Mammary epithelial cell (primary cell): ENCODE measurements at regions of chr4 and their contacts with region 1.

Region 1: DNA sequence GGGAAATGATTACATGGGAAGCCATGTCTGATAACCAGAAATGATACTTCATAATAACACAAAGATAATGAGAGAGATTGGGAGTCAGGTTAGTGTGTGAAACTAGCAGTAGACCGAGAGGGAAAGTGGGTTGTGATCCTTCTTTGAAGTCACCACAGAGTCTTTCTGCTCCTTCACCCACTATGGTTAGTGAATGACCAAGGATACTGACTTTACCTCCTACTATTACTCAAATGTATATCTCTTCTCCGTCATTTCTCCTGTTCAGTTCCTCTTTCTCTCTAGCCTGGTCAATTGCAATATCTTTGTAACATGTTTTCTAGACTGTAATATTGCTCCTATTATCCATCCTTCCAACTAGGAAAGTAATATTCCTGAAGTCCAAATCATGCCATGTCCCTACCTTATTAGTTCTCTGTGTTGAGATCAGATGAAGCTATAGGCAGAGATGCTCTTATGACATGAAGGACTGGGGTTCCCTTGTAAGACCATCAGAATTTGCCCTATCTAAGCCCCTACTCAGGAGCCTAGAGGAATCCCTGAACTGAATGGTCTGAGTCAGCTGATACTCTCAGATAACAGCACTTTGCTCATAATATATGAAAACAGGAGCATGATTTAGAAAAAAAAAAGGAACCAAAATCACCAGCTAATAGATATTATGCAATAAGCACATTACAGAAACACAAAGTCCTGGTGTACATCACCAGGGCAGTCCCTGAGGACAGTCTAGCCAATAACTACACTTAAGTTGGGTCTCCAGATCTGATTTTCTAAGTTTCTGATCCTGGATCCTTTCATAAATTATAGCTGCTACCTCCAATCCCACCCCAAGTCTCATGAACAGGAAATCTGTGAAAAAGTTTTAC is 81.2 kb downstream of the SHROOM3 start:
- DNase-seq: no peak
- H3K4me3 ChIP-seq: no peak overlapping the region
- H3K27ac ChIP-seq: no peak overlapping the region
- H3K4me1 ChIP-seq: no peaks in the 10 kb centered on the region
- H3K27me3 ChIP-seq: no peaks in the 10 kb centered on the region
- CTCF ChIP-seq: no peak

Region 2: DNA sequence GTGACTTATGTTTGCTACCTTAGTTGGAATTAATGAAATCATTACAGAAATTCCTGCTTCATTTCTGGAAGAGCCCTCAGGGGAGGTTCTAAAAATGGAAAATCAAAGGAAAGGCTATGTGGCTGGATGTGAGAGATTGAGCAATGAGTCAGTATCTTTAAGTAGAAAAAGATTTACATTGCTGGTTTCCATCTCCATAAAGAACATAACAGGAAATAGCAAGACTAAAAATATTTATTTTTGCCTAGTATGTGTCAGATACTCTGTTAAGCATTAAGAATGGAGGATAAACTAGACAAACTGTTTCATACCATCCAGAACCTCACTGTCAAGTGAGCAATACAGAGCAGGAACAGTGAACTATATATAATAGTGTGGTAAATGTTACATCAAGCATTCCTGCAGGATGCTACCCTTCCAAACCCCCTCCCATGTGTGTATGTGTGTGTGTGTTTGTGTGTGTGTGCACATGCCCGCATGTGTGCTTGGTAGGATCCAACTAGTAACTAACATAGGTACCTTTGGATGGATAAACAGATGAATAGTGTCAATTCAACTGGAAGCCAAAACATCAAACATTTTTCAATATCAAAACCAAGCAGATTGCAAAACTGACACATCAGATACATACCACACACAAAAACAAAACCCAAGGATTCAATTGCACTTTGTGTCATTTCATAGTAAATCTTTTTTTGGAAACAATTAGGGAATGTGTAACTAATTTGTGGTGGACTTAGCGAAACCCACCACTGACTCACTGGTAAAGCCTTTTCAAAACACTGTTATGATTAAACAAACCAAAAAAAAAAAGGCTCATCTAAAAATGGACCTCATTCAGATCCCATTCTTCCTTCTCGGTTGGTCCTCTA is 142.3 kb after region 1 on chr4:
- CTCF ChIA-PET with region 1: no interaction called
- dilution Hi-C with region 1: no loop called
- in situ Hi-C with region 1: no loop called
- intact Hi-C with region 1: loop called (anchors 1 kb)
- DNase-seq: peak; percentile 62
- H3K4me3 ChIP-seq: no peak overlapping the region
- H3K27ac ChIP-seq: peak overlapping the region; percentile 32
- H3K4me1 ChIP-seq: peaks cover 25% of the 10 kb centered on the region
- H3K27me3 ChIP-seq: no peaks in the 10 kb centered on the region
- CTCF ChIP-seq: no peak

Region 3: DNA sequence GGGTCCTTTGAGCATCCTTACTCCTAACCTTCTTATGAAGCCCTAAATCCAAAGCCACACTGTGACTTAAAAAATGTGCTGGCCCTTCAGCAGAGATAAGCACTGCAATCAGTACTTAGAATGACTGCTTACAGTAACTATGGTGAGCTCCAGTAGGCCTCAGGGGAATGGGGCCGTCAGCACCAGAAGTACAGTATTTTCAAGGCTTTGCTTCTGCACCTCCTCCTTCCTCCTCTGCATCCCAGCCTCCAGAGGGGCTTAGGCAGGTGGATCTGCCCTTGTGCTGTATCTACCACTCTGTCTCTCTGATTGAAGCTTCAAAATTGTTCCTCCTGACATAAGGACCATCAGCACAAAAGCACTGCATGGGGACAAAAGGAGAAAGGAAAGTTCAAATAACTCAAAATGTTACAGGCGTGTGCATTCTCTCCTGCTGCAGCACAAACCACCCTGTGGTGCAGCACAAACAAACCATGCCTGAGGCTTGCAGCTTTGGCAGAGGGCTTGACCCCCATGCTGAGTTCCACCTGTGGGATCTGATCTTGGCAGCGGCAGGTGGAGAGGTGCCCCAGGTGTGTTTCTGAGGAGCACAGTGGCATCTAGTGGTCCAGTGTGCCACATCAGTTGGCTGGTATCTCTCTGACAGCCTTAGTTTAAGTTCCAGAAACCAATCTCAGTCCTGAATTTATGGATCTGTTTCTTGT is 217.0 kb after region 1 on chr4:
- CTCF ChIA-PET with region 1: no interaction called
- dilution Hi-C with region 1: no loop called
- in situ Hi-C with region 1: loop called in 1 of 2 experiments (anchors 5 kb)
- intact Hi-C with region 1: loop called (anchors 1 kb)
- DNase-seq: peak; percentile 34
- H3K4me3 ChIP-seq: no peak overlapping the region
- H3K27ac ChIP-seq: no peak overlapping the region
- H3K4me1 ChIP-seq: peaks cover 4% of the 10 kb centered on the region
- H3K27me3 ChIP-seq: no peaks in the 10 kb centered on the region
- CTCF ChIP-seq: peak; percentile 29 to 50

Region 4: GRCh38 chr4:76758290-76758882 is 242.2 kb after region 1 on chr4:
- CTCF ChIA-PET with region 1: no interaction called
- dilution Hi-C with region 1: no loop called
- in situ Hi-C with region 1: loop called in 1 of 2 experiments (anchors 5 kb)
- intact Hi-C with region 1: loop called (anchors 1 kb)
- DNase-seq: peak; percentile 55
- H3K4me3 ChIP-seq: no peak overlapping the region
- H3K27ac ChIP-seq: no peak overlapping the region
- H3K4me1 ChIP-seq: peaks cover 16% of the 10 kb centered on the region
- H3K27me3 ChIP-seq: no peaks in the 10 kb centered on the region
- CTCF ChIP-seq: peak; percentile 73 to 91

Region 5: GRCh38 chr4:76984127-76984526 is 467.9 kb after region 1 on chr4:
- CTCF ChIA-PET with region 1: no interaction called
- dilution Hi-C with region 1: no loop called
- in situ Hi-C with region 1: no loop called
- intact Hi-C with region 1: loop called (anchors 2 kb)
- DNase-seq: peak; percentile 24
- H3K4me3 ChIP-seq: no peak overlapping the region
- H3K27ac ChIP-seq: peak overlapping the region; percentile 6
- H3K4me1 ChIP-seq: peaks cover 21% of the 10 kb centered on the region
- H3K27me3 ChIP-seq: no peaks in the 10 kb centered on the region
- CTCF ChIP-seq: peak; percentile 16 to 45

Region 6: GRCh38 chr4:77308843-77309242 is 792.6 kb after region 1 on chr4:
- CTCF ChIA-PET with region 1: no interaction called
- dilution Hi-C with region 1: no loop called
- in situ Hi-C with region 1: no loop called
- intact Hi-C with region 1: loop called (anchors 10 kb)
- DNase-seq: peak; percentile 38
- H3K4me3 ChIP-seq: no peak overlapping the region
- H3K27ac ChIP-seq: no peak overlapping the region
- H3K4me1 ChIP-seq: no peaks in the 10 kb centered on the region
- H3K27me3 ChIP-seq: no peaks in the 10 kb centered on the region
- CTCF ChIP-seq: peak; percentile 51 to 64